Dorsolateral prefrontal cortex (tissue), 120 donors: ENCODE measurements at regions of chr5 and their contacts with region 1.

Region 1: DNA sequence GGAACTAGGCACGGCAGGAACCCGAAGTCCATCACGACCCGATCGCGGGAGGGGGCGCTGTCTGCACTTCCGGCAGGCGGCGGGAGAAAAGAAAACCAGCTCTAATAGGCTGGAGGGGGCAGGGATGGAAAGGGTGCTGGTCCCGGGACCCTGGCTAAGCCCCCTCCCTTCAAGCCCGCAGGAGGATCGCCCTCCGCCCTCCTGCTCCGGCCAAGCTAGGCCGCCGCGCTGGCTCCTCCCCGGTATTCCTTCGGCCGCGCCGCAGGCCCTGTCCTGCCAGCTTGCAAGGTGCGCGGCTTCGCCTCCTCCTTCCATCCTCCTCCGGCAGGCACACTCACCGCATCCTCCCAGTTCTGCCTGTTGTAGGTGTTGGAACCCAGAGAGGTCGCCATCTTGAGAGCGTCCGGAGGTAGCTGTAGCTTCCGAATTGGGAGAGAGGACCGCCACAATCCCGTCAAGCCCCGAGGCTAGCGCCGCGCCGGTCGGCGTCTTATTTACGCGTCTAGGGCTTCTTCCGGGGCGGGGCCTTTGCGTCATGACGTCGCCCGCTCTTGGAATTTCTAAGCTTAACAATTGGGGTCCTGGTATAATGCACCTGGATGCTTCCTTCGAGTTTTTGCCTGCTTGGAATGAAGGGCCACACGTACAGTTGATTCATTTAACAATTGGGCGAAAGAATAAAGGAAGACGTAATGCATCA is at the start of gene RBM22:
- DNase-seq: peak; percentile 89 to 96 (median 95)
- H3K4me3 ChIP-seq: peak within 1 kb of the TSS; percentile 75 to 100 (median 98)
- H3K27ac ChIP-seq: peak within 1 kb of the TSS; percentile 85 to 100 (median 98)
- H3K27me3 ChIP-seq: no peaks in the 10 kb centered on the region
- CTCF ChIP-seq: peak; percentile 35 to 83 (median 69)
- total RNA-seq, gene RBM22: 36.7 to 64.8 (median 47.0) TPM

Region 2: DNA sequence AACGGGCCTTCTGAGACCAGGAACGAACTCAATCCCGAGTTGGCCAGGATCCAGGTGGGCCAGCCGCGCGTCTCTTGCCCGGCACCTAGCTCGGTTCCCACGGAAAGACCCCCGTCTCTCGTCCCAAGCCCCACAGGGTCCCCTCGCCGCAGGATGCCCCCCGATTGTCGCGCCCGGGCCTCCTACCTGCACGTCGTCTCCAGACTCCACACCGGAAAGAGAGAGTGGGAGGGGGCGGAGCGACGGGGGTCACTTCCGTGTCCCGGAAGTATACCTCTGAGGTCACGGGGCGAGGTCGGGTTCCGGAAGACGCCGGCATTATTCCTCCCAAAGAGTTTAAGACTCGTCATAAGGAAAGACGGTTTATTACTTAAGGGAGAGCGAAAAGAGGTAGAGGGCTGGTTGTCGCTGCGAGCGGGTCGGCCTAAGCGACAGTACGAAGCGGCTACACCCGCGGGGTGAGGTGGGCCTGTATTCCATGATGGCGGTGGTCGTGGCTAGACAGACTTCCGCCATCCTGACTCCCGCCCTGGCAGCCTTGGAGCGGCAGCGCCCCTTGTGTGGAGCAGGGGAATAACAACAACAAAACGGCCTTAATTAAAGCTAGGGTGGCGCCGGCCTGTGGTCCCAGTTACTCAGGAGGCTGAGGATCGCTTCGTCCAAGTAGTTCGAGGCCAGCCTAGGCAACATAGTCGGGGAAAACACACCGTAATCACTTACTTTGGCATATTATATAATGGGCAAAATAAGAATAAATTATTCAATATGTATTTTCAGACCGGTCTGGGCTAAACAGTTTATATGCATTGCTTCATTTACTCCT is 251.0 kb before region 1 on chr5 and contains the start of gene RPS14:
- intact Hi-C with region 1: loop called in 1 of 2 experiments (anchors 2 kb)
- DNase-seq: peak; percentile 83 to 92 (median 88)
- H3K4me3 ChIP-seq: peak within 1 kb of the TSS; percentile 59 to 99 (median 88)
- H3K27ac ChIP-seq: peak within 1 kb of the TSS; percentile 76 to 100 (median 98)
- H3K27me3 ChIP-seq: no peaks in the 10 kb centered on the region
- CTCF ChIP-seq: peak; percentile 85 to 100 (median 95)
- total RNA-seq, gene RPS14: 441 to 866 (median 635) TPM

Region 3: GRCh38 chr5:150560401-150561193 is 140.1 kb before region 1 on chr5:
- intact Hi-C with region 1: loop called (anchors 2 to 5 kb)
- DNase-seq: peak in 9 of 10 donors; percentile 71 to 97 (median 85)
- H3K4me3 ChIP-seq: no peak overlapping the region
- H3K27ac ChIP-seq: peak overlapping the region in 1 of 59 donors; percentile 36
- H3K27me3 ChIP-seq: no peaks in the 10 kb centered on the region
- CTCF ChIP-seq: peak; percentile 86 to 99 (median 97)

Region 4: DNA sequence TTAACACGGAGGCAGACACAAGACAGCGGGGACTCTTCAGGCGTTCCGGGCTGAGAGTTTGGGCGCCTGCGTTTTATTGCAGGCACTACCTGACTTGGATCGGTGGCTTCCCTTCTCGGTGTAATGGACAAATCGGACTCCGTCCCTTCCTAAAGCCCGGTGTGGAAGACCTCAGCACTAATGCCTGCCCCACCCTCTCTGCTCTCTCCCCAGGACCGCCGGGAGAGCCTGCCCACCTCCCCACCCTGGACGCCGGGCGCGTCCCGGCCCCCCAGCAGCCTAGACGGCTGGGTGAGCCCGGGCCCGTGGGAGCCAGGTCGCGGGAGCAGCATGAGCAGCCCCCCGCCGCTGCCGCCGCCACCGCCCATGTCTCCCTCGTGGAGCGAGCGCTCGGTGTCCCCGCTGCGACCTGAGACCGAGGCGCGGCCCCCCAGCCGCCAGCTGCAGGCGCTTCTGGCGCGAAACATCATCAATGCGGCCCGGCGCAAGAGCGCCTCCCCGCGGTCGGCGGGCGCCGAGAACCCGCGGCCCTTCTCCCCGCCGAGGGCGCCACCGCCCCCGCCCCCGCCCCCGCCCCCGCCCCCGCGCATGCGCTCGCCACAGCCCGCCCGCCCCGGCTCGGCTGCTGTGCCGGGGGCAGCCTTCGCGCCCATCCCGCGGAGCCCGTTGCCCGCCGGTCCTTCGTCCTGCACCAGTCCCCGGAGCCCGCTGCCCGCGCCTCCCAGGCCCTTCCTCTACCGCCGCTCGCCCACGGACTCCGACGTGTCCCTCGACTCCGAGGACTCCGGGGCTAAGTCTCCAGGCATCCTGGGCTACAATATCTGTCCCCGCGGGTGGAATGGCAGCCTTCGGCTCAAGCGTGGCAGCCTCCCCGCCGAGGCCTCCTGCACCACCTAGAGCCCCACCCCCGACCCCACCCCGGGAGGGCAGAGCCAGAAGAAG is 44.3 kb before region 1 on chr5:
- intact Hi-C with region 1: loop called (anchors 5 kb)
- DNase-seq: peak in 9 of 10 donors; percentile 49 to 84 (median 64)
- H3K4me3 ChIP-seq: peak overlapping the region; percentile 29 to 80 (median 65)
- H3K27ac ChIP-seq: peak overlapping the region in 36 of 59 donors; percentile 12 to 81 (median 58)
- H3K27me3 ChIP-seq: no peaks in the 10 kb centered on the region
- CTCF ChIP-seq: peak in 55 of 56 donors; percentile 44 to 96 (median 71)

Region 5: DNA sequence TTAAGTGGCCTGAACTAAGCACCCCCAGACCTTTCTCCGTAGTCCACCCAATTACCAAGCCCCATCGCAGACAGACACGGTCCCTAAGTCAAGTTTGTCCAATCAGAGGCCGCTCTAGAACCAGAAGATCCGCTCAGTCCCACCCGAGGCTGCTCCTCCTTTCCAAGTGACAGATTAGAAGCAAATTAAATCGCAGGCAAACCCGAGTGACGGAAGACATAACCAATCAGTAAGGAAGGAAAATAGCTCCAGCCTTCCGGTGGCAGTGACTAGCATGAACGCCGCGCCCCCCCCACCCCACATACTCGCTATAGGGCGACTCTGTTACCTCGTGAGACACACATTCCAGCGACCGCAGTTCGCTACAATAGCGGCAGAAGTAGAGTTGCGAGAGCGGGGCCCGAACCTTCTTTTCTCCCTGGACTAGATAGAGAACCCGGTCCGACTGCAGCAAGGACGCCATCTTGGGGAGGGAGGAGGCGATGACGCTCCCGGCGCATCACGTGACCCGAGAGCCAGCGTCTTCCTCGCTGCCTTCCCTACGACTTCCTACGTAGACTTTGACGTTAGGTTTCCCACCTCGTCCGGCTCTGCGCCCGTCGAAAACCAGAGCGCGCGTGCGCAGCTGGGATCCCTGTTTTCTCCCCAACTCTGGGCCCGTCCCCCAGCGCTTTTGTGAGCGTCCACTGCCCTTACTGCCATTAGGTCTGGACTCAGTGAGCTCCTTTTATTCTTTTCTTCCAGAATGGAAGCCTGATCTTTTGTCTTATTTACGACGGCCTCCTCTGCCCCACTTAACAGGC is 58.0 kb after region 1 on chr5 and contains the start of gene DCTN4:
- intact Hi-C with region 1: loop called (anchors 2 kb)
- DNase-seq: peak; percentile 96 to 99 (median 97)
- H3K4me3 ChIP-seq: peak within 1 kb of the TSS; percentile 61 to 96 (median 79)
- H3K27ac ChIP-seq: peak within 1 kb of the TSS; percentile 92 to 100 (median 99)
- H3K27me3 ChIP-seq: no peaks in the 10 kb centered on the region
- CTCF ChIP-seq: peak in 26 of 56 donors; percentile 7 to 60 (median 24)
- total RNA-seq, gene DCTN4: 75.7 to 114 (median 94.9) TPM